ENCODE measurements at regions of chr7 and their contacts with region 1.

Region 1: DNA sequence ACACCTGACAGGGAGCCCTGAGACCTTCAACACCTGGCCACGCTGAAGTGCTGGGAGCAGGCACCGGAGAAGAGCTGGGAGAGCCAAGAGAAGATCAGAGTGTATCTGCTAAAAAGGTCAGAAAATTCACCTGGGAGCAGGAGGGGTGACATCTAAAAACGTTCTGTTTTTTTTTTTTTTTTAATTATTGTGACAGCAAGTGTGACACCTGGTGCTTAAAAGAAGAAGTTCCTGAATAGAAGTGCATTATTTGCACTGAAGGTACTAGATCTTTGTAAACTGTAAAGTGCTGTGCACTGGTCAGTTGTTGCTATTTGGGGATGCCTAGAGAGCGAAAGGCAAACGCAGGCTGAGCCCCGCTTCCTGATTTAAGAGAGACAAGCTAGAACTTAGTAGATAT is 422.0 kb downstream of the PLXNA4 start:
- DNase-seq: no peak
- H3K4me3 ChIP-seq: no peak overlapping the region
- H3K27ac ChIP-seq: peak overlapping the region in 1 of 2 experiments; percentile 87; a peak in 2 of 4 replicates
- H3K4me1 ChIP-seq: peaks cover 0 to 34% of the 10 kb centered on the region in 2 experiments; a peak in 2 of 4 replicates
- H3K27me3 ChIP-seq: no peaks in the 10 kb centered on the region
- CTCF ChIP-seq: peak; percentile 45
- EP300 ChIP-seq: no peak
- RAD21 ChIP-seq: no peak; the same call in 1 of the 2 replicates

Region 2: DNA sequence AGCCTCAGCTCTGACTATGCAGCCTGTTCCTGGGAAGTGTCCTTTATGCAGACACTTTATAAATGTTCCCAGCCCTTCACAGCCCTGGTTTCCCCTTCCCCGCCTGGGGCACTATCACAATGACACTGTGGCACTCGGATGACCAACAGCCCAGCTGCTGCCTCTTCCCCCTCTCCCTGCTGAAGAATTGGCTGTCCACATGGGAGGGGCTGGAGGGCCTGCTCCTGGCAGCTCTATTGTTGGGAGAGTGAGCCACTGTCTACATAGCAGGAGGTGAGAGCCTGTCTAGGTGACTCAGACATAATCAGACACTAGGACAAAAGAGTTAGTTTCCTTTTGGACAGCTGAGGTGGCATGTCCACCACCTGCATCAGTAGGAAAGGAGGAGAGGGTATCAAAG is 15.4 kb before region 1 on chr7:
- CTCF ChIA-PET with region 1: interaction called, 12 read pairs
- POLR2A ChIA-PET with region 1: no interaction called
- DNase-seq: no peak
- H3K4me3 ChIP-seq: no peak overlapping the region
- H3K27ac ChIP-seq: no peak overlapping the region; a peak in 2 of 4 replicates
- H3K4me1 ChIP-seq: peaks cover 5 to 23% of the 10 kb centered on the region in 2 experiments; a peak in 3 of 4 replicates
- H3K27me3 ChIP-seq: no peaks in the 10 kb centered on the region
- CTCF ChIP-seq: no peak
- EP300 ChIP-seq: no peak
- RAD21 ChIP-seq: no peak